H1 (cell line): ENCODE measurements at regions of chr16 and their contacts with region 1.

Region 1: GRCh38 chr16:68520649-68521086 is 18.4 kb upstream of the ZFP90 start:
- DNase-seq: peak; percentile 58 to 96
- H3K4me3 ChIP-seq: peak overlapping the region in 3 of 4 experiments; percentile 2 to 43 (median 14); a peak in 4 of 8 replicates
- H3K27ac ChIP-seq: no peak overlapping the region
- H3K4me1 ChIP-seq: no peaks in the 10 kb centered on the region; a peak in 1 of 7 replicates
- H3K27me3 ChIP-seq: peaks cover 0 to 7% (median 3%) of the 10 kb centered on the region in 4 experiments; a peak in 4 of 7 replicates
- CTCF ChIP-seq: peak; percentile 99 to 100 (median 100)
- EP300 ChIP-seq: 0 out of 3 replicates have a peak, but pooled peaks of 1 of the 2 experiments have one; percentile 33
- POLR2A ChIP-seq: no peak
- RAD21 ChIP-seq: peak; percentile 61 to 73

Region 2: GRCh38 chr16:68356249-68356918 is 164.3 kb before region 1 on chr16:
- CTCF ChIA-PET with region 1: interaction called, 11 read pairs
- POLR2A ChIA-PET with region 1: no interaction called
- DNase-seq: no peak
- H3K4me3 ChIP-seq: no peak overlapping the region
- H3K27ac ChIP-seq: no peak overlapping the region
- H3K4me1 ChIP-seq: no peaks in the 10 kb centered on the region
- H3K27me3 ChIP-seq: no peaks in the 10 kb centered on the region
- CTCF ChIP-seq: no peak
- EP300 ChIP-seq: no peak
- POLR2A ChIP-seq: no peak
- RAD21 ChIP-seq: no peak

Region 3: GRCh38 chr16:68452176-68452575 is 68.5 kb before region 1 on chr16:
- CTCF ChIA-PET with region 1: no interaction called
- POLR2A ChIA-PET with region 1: no interaction called
- DNase-seq: no peak
- H3K4me3 ChIP-seq: no peak overlapping the region
- H3K27ac ChIP-seq: no peak overlapping the region
- H3K4me1 ChIP-seq: peaks cover 0 to 8% (median 8%) of the 10 kb centered on the region in 4 experiments; a peak in 5 of 7 replicates
- H3K27me3 ChIP-seq: peaks cover 7 to 10% (median 9%) of the 10 kb centered on the region in 4 experiments
- CTCF ChIP-seq: no peak
- EP300 ChIP-seq: no peak
- POLR2A ChIP-seq: no peak
- RAD21 ChIP-seq: no peak

Region 4: DNA sequence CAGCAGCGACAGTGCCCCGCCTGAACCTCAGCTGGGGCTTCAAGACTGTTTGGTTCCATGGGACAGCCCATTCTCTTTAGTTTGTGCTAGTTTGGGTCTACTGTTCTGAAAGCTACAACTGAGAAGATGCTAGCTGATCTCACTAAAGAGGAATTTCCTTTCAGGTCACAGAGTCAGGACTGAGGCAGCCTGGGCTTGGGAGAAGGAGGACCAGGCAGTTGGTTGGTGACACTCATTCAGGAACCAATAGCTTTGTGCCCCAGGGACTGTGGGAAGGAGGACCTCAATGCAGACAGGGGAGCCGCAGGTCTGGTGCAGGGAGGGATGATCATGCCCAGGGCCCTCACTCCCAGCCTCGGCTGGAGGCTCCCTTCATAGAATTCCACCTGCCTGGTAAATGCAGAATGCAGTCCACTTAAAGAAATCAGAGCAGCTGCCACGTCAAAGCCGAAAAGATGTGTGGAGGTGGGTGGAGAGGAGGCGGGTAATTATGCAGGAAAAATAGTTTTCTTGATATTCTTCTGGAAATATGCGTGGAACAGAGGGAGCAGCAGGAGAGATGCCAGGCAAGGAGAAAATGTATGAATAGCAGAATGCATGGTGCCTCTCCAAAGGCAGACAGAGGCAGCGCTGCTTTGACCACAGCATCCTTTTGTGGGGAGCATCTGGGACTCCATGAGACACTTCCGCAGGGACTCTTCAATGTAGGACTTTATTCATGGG is 14.2 kb before region 1 on chr16:
- CTCF ChIA-PET with region 1: interaction called, 21 read pairs
- POLR2A ChIA-PET with region 1: interaction called, 4 read pairs
- DNase-seq: no peak
- H3K4me3 ChIP-seq: no peak overlapping the region
- H3K27ac ChIP-seq: no peak overlapping the region
- H3K4me1 ChIP-seq: no peaks in the 10 kb centered on the region
- H3K27me3 ChIP-seq: peaks cover 0 to 3% (median 1%) of the 10 kb centered on the region in 4 experiments; a peak in 2 of 7 replicates
- CTCF ChIP-seq: no peak
- EP300 ChIP-seq: no peak
- POLR2A ChIP-seq: no peak
- RAD21 ChIP-seq: no peak

Region 5: GRCh38 chr16:68605746-68606145 is 85.1 kb after region 1 on chr16:
- CTCF ChIA-PET with region 1: no interaction called
- POLR2A ChIA-PET with region 1: no interaction called
- DNase-seq: no peak
- H3K4me3 ChIP-seq: no peak overlapping the region
- H3K27ac ChIP-seq: no peak overlapping the region
- H3K4me1 ChIP-seq: peaks cover 0 to 3% (median 0%) of the 10 kb centered on the region in 4 experiments; a peak in 2 of 7 replicates
- H3K27me3 ChIP-seq: no peaks in the 10 kb centered on the region
- CTCF ChIP-seq: no peak
- EP300 ChIP-seq: no peak
- POLR2A ChIP-seq: no peak
- RAD21 ChIP-seq: no peak